ENCODE measurements at regions of chr2 and their contacts with region 1.

Region 1: DNA sequence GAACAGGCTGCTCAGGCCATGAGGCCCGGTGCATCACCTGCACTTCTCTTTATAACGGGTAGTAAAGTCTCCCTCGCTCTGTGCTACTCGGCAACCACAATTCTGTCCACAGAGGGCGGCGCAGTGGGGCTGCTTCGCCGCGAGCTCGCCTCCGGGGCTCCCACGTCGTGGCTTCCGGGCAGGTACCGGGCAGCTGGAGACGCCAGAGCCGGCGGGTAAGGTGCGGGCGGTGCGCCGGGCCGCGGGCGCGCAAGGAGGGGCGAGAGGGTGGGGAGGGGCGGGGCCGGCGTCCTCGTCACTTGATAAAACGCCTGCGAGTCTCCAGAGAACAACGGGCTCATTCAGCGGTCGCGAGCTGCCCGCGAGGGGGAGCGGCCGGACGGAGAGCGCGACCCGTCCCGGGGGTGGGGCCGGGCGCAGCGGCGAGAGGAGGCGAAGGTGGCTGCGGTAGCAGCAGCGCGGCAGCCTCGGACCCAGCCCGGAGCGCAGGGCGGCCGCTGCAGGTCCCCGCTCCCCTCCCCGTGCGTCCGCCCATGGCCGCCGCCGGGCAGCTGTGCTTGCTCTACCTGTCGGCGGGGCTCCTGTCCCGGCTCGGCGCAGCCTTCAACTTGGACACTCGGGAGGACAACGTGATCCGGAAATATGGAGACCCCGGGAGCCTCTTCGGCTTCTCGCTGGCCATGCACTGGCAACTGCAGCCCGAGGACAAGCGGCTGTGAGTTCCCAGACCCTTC is at the start of gene ITGA6:
- DNase-seq: no peak
- H3K4me3 ChIP-seq: peak within 1 kb of the TSS; percentile 71
- CTCF ChIP-seq: peak; percentile 14

Region 2: GRCh38 chr2:172416447-172417058 is 10.9 kb before region 1 on chr2:
- CTCF ChIA-PET with region 1: interaction called, 10 read pairs
- POLR2A ChIA-PET with region 1: no interaction called
- DNase-seq: no peak
- H3K4me3 ChIP-seq: no peak overlapping the region
- CTCF ChIP-seq: no peak

Region 3: GRCh38 chr2:172442072-172442895 is 14.9 kb after region 1 on chr2:
- CTCF ChIA-PET with region 1: interaction called, 12 read pairs
- POLR2A ChIA-PET with region 1: interaction called, 5 read pairs
- DNase-seq: peak; percentile 41
- H3K4me3 ChIP-seq: no peak overlapping the region
- CTCF ChIP-seq: no peak

Measured in AG04449 (cell line).